ENCODE measurements at regions of chr11 and their contacts with region 1.

Region 1: GRCh38 chr11:125433454-125434121 is 62.5 kb downstream of the FEZ1 start:
- H3K4me3 Mint-ChIP-seq: no peak overlapping the region
- H3K27ac Mint-ChIP-seq: no peak overlapping the region
- H3K4me1 Mint-ChIP-seq: peaks cover 6% of the 10 kb centered on the region
- H3K27me3 Mint-ChIP-seq: peaks cover 21% of the 10 kb centered on the region

Region 2: DNA sequence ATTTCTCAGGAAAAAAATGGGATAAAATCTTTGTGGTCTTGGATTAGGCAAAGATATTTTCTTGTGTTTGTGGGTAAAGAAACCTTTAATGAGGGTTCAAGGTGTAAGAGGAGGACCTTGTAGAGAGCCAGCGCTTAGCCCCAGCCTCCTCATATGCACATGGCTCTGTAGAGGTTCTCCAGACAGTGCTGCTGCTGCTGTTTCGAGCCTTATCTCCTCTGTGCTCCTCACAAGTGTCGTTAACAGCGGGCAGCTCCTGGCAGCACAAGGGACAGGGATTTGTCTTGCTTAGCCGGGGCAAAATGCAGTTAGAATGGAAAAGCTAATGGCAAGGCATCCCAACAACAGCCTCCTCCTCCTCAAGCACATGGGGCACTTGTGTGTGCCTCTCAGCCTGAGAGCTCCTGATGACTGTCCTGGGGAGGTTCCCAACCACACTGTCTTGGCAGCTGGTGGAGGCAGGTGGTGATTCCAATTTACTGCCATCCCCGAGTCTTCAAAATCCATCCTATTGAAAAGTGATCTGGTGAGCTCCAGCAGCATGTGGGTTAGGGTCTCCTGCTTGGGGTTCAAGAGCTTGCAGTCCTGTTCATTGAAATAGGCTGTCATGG is 625.8 kb before region 1 on chr11:
- intact Hi-C with region 1: no loop called
- H3K4me3 Mint-ChIP-seq: no peak overlapping the region
- H3K27ac Mint-ChIP-seq: no peak overlapping the region
- H3K4me1 Mint-ChIP-seq: no peaks in the 10 kb centered on the region
- H3K27me3 Mint-ChIP-seq: peaks cover 52% of the 10 kb centered on the region

Region 3: GRCh38 chr11:125874556-125875124 is 441.1 kb after region 1 on chr11:
- intact Hi-C with region 1: loop called (anchors 10 kb)
- H3K4me3 Mint-ChIP-seq: no peak overlapping the region
- H3K27ac Mint-ChIP-seq: no peak overlapping the region
- H3K4me1 Mint-ChIP-seq: peaks cover 6% of the 10 kb centered on the region
- H3K27me3 Mint-ChIP-seq: peaks cover 5% of the 10 kb centered on the region